ENCODE measurements at regions of chr11 and their contacts with region 1.

Region 1: DNA sequence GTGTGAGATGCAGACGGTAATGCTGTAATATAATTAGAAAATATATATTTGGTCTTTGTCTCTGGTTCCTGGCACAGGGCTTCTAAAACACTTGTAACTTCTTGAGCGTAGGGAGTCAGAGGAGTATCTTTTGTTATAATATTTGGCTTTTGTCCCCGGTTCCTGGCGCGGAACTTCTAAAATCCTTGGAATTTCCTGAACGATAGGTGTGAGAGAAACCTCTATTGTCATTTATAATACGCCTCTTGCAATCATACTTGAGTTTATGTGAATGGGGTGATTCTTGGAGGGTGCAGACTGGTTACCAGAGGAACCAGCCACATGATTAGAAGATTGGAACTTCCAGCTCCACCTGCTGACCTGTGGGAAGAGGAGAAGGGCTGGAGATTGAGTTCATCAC is 54.1 kb upstream of the ZBED5 start:
- DNase-seq: no peak
- ATAC-seq: no peak
- H3K4me3 ChIP-seq: no peak overlapping the region
- H3K27ac ChIP-seq: no peak overlapping the region; a peak in 1 of 6 replicates
- H3K4me1 ChIP-seq: peaks cover 19% of the 10 kb centered on the region
- CTCF ChIP-seq: no peak
- EP300 ChIP-seq: no peak
- POLR2A ChIP-seq: no peak
- RAD21 ChIP-seq: no peak

Region 2: DNA sequence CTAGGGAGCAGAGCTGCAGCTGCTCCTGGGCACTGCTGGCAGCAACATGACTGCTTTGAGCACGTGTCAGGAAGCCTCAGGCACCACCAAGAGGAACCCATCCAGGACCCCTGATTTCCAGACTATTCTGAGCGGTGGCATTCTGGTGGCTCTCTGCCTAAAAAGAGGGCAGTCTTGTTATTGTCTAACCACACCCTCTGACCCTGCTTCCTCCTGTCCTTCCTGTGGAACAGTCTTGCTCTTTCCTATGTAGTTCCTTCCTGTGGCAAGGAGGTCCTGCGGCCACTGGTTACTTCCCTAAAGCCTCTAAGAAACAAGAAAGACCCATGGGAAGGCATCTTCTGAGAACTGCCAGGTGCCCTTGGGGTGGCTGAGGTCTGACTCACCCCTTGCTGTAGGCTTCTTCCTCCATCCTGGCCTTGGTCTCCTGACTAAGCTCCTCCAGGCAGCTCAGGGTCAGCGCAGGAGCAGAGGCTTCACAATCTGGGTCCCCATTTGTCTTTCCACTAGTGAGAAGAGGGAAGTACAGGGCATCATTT is 330.4 kb before region 1 on chr11:
- CTCF ChIA-PET with region 1: no interaction called
- POLR2A ChIA-PET with region 1: no interaction called
- DNase-seq: no peak
- ATAC-seq: no peak
- H3K4me3 ChIP-seq: no peak overlapping the region
- H3K27ac ChIP-seq: no peak overlapping the region
- H3K4me1 ChIP-seq: no peaks in the 10 kb centered on the region
- CTCF ChIP-seq: no peak
- EP300 ChIP-seq: no peak
- POLR2A ChIP-seq: no peak
- RAD21 ChIP-seq: no peak

Region 3: DNA sequence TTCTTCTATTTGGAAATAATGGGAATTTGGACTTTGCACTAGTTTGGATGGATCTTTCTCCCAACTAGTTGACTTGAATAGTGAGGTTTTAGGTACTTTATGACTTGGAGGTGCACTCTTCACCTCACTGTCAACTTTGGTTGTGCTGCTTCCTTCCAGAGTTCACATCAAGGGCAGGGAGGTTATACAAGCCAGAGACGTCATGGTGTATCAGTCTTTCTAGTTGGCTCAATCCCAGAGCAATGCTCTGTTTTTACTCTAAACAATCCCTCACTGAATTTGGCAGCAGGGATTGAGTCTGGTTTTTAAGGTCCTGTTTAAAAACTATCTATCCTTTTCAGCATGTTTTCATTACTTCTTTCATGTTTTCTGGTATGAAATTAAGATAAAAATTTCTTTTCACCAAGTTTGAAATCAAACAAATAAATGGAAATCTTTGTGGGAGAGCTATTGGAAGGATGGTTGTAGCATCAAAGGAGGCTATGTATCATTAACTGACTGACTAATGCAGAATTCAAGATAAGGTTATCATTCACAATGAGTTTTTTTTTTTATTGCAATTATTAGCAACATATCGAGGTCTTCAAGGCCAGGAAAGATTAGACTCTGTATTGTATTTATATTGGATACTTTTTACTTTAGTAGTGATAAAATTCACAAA is 26.1 kb before region 1 on chr11:
- CTCF ChIA-PET with region 1: no interaction called
- POLR2A ChIA-PET with region 1: no interaction called
- DNase-seq: peak; percentile 18 to 91
- ATAC-seq: peak; percentile 90 to 92
- H3K4me3 ChIP-seq: no peak overlapping the region
- H3K27ac ChIP-seq: peak overlapping the region; percentile 79 to 90
- H3K4me1 ChIP-seq: peaks cover 47% of the 10 kb centered on the region
- CTCF ChIP-seq: no peak
- EP300 ChIP-seq: peak; percentile 64 to 89; a peak in 3 of 5 replicates
- POLR2A ChIP-seq: no peak
- RAD21 ChIP-seq: peak; percentile 21 to 23; a peak in 2 of 5 replicates

Region 4: GRCh38 chr11:10925144-10925926 is 13.4 kb after region 1 on chr11:
- CTCF ChIA-PET with region 1: interaction called, 16 read pairs
- POLR2A ChIA-PET with region 1: no interaction called
- DNase-seq: peak in 1 of 2 experiments; percentile 48
- ATAC-seq: peak in 1 of 2 experiments; percentile 20; a peak in 3 of 6 replicates
- H3K4me3 ChIP-seq: no peak overlapping the region
- H3K27ac ChIP-seq: peak overlapping the region; percentile 59 to 98; a peak in 5 of 6 replicates
- H3K4me1 ChIP-seq: peaks cover 59% of the 10 kb centered on the region
- CTCF ChIP-seq: no peak
- EP300 ChIP-seq: peak; percentile 16 to 69; a peak in 2 of 5 replicates
- POLR2A ChIP-seq: no peak
- RAD21 ChIP-seq: no peak

Measured in A549 (cell line).